GM10248 (cell line): ENCODE measurements at regions of chr1 and their contacts with region 1.

Region 1: GRCh38 chr1:213070406-213070805 is 19.4 kb downstream of the RPS6KC1 start:
- DNase-seq: peak; percentile 47
- CTCF ChIP-seq: peak; percentile 39

Region 2: GRCh38 chr1:212915245-212916091 is 154.9 kb before region 1 on chr1:
- CTCF ChIA-PET with region 1: no interaction called
- POLR2A ChIA-PET with region 1: no interaction called
- DNase-seq: no peak
- CTCF ChIP-seq: peak; percentile 21

Region 3: DNA sequence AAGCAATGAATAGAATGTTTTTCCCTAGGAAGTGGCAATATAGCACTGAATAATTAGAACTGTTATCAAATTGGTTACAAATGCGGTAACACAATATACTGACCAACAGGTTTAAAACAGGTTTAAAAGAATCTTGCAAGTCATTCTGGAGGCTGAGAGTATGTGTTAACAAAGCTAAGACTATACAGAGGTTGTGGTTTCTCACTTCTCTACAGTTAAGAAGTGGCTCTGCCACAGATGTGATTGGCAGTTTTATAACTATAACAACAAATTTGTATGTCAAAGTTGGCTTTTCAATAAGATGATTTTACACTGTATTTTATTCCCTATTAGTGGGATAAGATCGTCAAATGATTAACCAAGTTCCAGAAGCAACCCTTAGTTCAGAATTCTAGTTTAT is 61.8 kb before region 1 on chr1:
- CTCF ChIA-PET with region 1: no interaction called
- POLR2A ChIA-PET with region 1: no interaction called
- DNase-seq: peak; percentile 29
- CTCF ChIP-seq: no peak

Region 4: DNA sequence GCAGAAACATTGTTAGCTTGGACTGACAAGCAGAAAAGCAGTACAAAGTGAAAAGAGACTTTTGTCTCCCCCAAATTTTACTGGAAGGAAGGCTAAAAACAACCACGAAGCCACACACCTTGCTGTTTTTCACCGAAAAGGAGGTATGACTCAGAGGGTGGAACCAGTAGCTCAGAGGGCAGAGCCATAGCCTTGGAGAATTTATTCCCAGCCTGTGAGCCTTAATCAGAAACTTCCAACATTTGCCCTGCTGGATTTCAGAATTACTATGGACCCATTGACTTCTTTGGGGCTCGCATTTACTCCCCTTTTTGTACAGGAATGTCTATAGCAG is 12.7 kb after region 1 on chr1:
- CTCF ChIA-PET with region 1: interaction called, 11 read pairs
- POLR2A ChIA-PET with region 1: no interaction called
- DNase-seq: no peak
- CTCF ChIP-seq: no peak